B cell (primary cell): ENCODE measurements at regions of chr15 and their contacts with region 1.

Region 1: DNA sequence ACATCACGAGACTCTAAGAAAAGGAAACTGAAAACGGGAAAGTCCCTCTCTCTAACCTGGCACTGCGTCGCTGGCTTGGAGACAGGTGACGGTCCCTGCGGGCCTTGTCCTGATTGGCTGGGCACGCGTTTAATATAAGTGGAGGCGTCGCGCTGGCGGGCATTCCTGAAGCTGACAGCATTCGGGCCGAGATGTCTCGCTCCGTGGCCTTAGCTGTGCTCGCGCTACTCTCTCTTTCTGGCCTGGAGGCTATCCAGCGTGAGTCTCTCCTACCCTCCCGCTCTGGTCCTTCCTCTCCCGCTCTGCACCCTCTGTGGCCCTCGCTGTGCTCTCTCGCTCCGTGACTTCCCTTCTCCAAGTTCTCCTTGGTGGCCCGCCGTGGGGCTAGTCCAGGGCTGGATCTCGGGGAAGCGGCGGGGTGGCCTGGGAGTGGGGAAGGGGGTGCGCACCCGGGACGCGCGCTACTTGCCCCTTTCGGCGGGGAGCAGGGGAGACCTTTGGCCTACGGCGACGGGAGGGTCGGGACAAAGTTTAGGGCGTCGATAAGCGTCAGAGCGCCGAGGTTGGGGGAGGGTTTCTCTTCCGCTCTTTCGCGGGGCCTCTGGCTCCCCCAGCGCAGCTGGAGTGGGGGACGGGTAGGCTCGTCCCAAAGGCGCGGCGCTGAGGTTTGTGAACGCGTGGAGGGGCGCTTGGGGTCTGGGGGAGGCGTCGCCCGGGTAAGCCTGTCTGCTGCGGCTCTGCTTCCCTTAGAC is at the start of gene B2M:
- DNase-seq: peak; percentile 99
- ATAC-seq: peak; percentile 75
- H3K4me3 ChIP-seq: peak within 1 kb of the TSS; percentile 90 to 100 (median 100)
- H3K4me3 Mint-ChIP-seq: peak within 1 kb of the TSS; percentile 99
- H3K27ac ChIP-seq: peak within 1 kb of the TSS; percentile 99 to 100
- H3K27ac Mint-ChIP-seq: peak within 1 kb of the TSS; percentile 100
- H3K4me1 ChIP-seq: peaks cover 39 to 46% of the 10 kb centered on the region in 2 donors
- H3K4me1 Mint-ChIP-seq: peaks cover 44% of the 10 kb centered on the region
- H3K27me3 ChIP-seq: no peaks in the 10 kb centered on the region
- H3K27me3 Mint-ChIP-seq: no peaks in the 10 kb centered on the region
- CTCF ChIP-seq: no peak
- total RNA-seq, gene B2M: 3,928 and 3,981 TPM in 2 replicates

Region 2: DNA sequence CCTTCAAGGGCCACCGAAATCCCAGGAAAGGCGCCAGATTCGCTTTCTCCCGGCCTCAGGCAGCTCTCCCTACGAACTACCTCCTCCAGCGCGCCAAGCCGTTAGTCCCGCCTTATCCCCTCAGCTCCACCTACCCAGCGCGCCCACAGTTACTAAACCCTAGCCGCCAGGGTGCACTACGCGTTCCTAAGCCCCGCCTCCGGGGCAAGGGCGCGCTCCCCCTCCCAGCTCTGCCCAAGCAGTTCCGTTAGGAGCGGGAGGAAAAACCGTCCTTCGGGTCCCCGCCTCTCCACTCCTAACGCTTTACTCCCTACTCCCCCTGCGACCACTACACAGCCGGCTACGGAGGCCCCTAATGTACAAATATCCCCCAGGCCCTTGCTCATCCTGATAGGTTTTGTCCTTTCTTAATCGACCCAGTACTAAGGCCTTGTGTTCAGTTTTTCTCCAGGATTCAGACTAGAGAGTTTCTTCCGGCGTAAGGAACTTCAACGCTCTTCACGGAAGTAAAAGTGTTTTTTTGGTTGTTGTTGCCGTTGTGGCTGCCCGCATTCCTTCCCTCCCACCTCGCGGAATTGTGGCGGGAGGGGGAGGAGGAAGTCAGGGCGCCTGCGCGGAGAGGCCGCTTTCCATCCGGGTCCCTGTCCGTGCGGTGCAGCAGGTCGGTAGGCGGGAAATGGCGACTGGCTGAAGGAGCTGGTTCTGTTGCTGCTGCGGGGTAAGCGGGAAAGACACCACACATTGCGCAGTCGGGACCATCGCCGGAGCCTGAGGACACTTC is 284.4 kb before region 1 on chr15 and contains the start of gene CTDSPL2:
- CTCF ChIA-PET with region 1: interaction called, 5 read pairs
- POLR2A ChIA-PET with region 1: no interaction called
- intact Hi-C with region 1: loop called (anchors 5 kb)
- DNase-seq: peak; percentile 94
- ATAC-seq: peak; percentile 97
- H3K4me3 ChIP-seq: peak within 1 kb of the TSS; percentile 93 to 100 (median 98)
- H3K4me3 Mint-ChIP-seq: peak within 1 kb of the TSS; percentile 96
- H3K27ac ChIP-seq: peak within 1 kb of the TSS; percentile 95 to 98
- H3K27ac Mint-ChIP-seq: peak within 1 kb of the TSS; percentile 98
- H3K4me1 ChIP-seq: peaks cover 18 to 23% of the 10 kb centered on the region in 2 donors
- H3K4me1 Mint-ChIP-seq: peaks cover 46% of the 10 kb centered on the region
- H3K27me3 ChIP-seq: no peaks in the 10 kb centered on the region
- H3K27me3 Mint-ChIP-seq: no peaks in the 10 kb centered on the region
- CTCF ChIP-seq: peak; percentile 34
- total RNA-seq, gene CTDSPL2: 79.5 and 84.1 TPM in 2 replicates

Region 3: GRCh38 chr15:44536962-44537734 is 174.4 kb before region 1 on chr15 and contains the start of gene EIF3J:
- CTCF ChIA-PET with region 1: no interaction called
- POLR2A ChIA-PET with region 1: no interaction called
- intact Hi-C with region 1: loop called (anchors 5 kb)
- DNase-seq: peak; percentile 97
- ATAC-seq: peak; percentile 89
- H3K4me3 ChIP-seq: peak within 1 kb of the TSS; percentile 82 to 99 (median 92)
- H3K4me3 Mint-ChIP-seq: peak within 1 kb of the TSS; percentile 93
- H3K27ac ChIP-seq: peak within 1 kb of the TSS; percentile 83 to 94
- H3K27ac Mint-ChIP-seq: peak within 1 kb of the TSS; percentile 98
- H3K4me1 ChIP-seq: peaks cover 15 to 21% of the 10 kb centered on the region in 2 donors
- H3K4me1 Mint-ChIP-seq: peaks cover 40% of the 10 kb centered on the region
- H3K27me3 ChIP-seq: no peaks in the 10 kb centered on the region
- H3K27me3 Mint-ChIP-seq: no peaks in the 10 kb centered on the region
- CTCF ChIP-seq: no peak
- total RNA-seq, gene EIF3J: 61.0 and 66.7 TPM in 2 replicates

Region 4: DNA sequence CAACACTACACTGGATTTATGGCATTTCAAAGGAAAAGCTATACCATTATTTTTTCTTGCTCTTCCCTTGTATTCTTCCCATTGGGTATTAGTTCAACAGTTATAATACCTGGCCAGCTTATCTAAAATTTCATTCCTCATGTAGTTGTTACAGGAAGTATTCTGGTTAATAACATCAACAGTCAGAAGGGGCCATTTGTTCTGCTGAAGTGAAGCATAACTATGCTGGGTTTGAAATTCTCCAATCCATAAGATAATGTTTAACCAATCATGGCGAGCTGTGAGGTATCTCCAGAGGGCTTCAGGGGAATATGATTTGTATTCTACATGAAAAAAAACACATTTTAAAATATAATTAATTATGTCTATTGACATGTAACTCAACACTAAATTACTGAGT is 91.5 kb before region 1 on chr15:
- CTCF ChIA-PET with region 1: no interaction called
- POLR2A ChIA-PET with region 1: no interaction called
- intact Hi-C with region 1: no loop called
- DNase-seq: no peak
- ATAC-seq: no peak
- H3K4me3 ChIP-seq: no peak overlapping the region
- H3K4me3 Mint-ChIP-seq: no peak overlapping the region
- H3K27ac ChIP-seq: no peak overlapping the region
- H3K27ac Mint-ChIP-seq: no peak overlapping the region
- H3K4me1 ChIP-seq: no peaks in the 10 kb centered on the region
- H3K4me1 Mint-ChIP-seq: peaks cover under 1% of the 10 kb centered on the region
- H3K27me3 ChIP-seq: no peaks in the 10 kb centered on the region
- H3K27me3 Mint-ChIP-seq: no peaks in the 10 kb centered on the region
- CTCF ChIP-seq: no peak

Region 5: DNA sequence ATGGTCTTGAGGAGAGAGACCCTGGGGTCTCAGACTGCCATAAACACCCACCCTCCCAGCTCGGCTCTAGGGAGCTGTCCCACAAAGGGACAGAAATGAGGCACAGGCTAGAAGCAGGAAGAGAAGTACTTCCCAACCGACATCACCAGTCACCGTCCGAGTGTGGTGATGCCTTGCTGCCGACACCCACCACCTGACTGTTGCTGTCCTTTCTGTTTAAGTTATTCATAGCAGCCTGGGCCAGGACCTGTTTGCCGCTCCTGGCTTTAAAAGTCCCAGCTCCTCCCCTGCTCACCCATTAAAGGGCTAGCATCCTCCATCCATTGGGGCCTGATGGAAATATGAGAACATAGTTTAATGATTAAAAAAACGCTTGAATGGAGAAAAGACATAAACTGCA is 34.9 kb before region 1 on chr15:
- CTCF ChIA-PET with region 1: interaction called, 28 read pairs
- POLR2A ChIA-PET with region 1: interaction called, 819 read pairs
- intact Hi-C with region 1: no loop called
- DNase-seq: peak; percentile 34
- ATAC-seq: peak; percentile 46
- H3K4me3 ChIP-seq: peak overlapping the region in 2 of 5 experiments; percentile 13 to 26
- H3K4me3 Mint-ChIP-seq: peak overlapping the region; percentile 75
- H3K27ac ChIP-seq: peak overlapping the region; percentile 80 to 87
- H3K27ac Mint-ChIP-seq: peak overlapping the region; percentile 91
- H3K4me1 ChIP-seq: peaks cover 69 to 77% of the 10 kb centered on the region in 2 donors
- H3K4me1 Mint-ChIP-seq: peaks cover 80% of the 10 kb centered on the region
- H3K27me3 ChIP-seq: no peaks in the 10 kb centered on the region
- H3K27me3 Mint-ChIP-seq: no peaks in the 10 kb centered on the region
- CTCF ChIP-seq: no peak

Region 6: DNA sequence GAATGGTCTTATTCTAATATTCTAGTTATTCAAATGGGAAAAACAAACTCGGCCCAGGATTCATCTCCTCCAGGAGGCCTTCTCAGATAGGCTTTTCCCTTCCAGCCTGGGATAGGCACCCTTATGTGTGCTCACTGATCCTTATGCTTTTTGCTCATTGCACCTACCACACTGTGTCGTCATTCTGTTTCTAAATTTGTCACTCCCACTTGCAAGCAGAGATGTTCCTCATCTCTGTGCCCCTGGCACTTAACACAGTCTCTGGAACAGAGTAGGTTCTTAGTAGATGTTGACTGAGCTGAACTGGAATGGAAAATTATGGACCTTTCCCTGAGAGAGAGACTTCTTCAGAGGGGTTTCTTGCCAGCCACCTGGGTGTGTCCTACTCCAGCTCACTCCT is 29.3 kb before region 1 on chr15:
- CTCF ChIA-PET with region 1: interaction called, 31 read pairs
- POLR2A ChIA-PET with region 1: interaction called, 73 read pairs
- intact Hi-C with region 1: loop called (anchors 1 kb)
- DNase-seq: no peak
- ATAC-seq: no peak
- H3K4me3 ChIP-seq: no peak overlapping the region
- H3K4me3 Mint-ChIP-seq: peak overlapping the region; percentile 78
- H3K27ac ChIP-seq: peak overlapping the region; percentile 79 to 80
- H3K27ac Mint-ChIP-seq: peak overlapping the region; percentile 96
- H3K4me1 ChIP-seq: peaks cover 47 to 48% of the 10 kb centered on the region in 2 donors
- H3K4me1 Mint-ChIP-seq: peaks cover 80% of the 10 kb centered on the region
- H3K27me3 ChIP-seq: no peaks in the 10 kb centered on the region
- H3K27me3 Mint-ChIP-seq: no peaks in the 10 kb centered on the region
- CTCF ChIP-seq: no peak

Region 7: DNA sequence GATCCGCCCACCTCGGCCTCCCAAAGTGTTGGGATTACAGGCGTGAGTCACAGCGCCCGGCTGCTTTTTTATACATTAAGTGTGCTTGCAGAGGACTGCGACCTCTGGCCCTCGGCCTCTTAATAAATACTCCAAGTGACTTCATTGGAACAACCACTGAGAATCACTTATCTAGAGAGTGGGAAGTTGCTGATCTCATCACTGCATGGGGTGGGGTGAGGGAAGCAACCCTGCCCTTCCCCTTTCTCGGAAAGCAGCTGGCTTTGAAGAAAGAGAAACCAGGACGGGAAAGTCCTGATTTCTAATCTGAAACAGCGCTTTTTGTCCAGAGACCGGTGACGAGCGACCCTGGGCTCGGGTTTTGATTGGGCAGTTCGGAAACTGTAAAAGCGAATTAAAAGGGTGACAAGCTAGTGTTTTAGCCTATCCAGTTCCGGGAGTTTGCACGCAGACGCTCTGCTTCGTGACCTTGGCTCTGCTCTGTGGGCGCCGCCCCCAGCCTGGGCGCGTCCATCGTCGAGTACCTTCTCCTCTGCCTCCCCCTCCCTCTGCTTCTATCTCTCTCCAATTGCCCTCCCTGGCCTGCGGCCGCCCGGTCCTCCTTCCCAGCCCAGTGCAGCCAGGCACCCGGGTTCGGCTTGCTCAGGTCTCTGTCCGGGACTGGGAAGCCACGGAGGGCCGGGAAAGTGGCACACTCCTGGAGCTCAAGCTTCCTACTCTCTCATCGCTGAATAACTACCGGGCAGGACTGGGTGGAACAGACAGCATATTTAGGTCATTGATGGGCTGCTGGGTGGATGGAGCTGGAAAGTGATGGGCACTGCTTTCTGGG is 17.3 kb after region 1 on chr15:
- CTCF ChIA-PET with region 1: interaction called, 529 read pairs
- POLR2A ChIA-PET with region 1: interaction called, 759 read pairs
- intact Hi-C with region 1: loop called (anchors 1 kb)
- DNase-seq: peak; percentile 98
- ATAC-seq: peak; percentile 77
- H3K4me3 ChIP-seq: peak overlapping the region; percentile 62 to 94 (median 88)
- H3K4me3 Mint-ChIP-seq: peak overlapping the region; percentile 99
- H3K27ac ChIP-seq: peak overlapping the region; percentile 94 to 95
- H3K27ac Mint-ChIP-seq: peak overlapping the region; percentile 99
- H3K4me1 ChIP-seq: peaks cover 61 to 70% of the 10 kb centered on the region in 2 donors
- H3K4me1 Mint-ChIP-seq: peaks cover 74% of the 10 kb centered on the region
- H3K27me3 ChIP-seq: no peaks in the 10 kb centered on the region
- H3K27me3 Mint-ChIP-seq: no peaks in the 10 kb centered on the region
- CTCF ChIP-seq: no peak